ENCODE measurements at regions of chrX and their contacts with region 1.

Region 1: DNA sequence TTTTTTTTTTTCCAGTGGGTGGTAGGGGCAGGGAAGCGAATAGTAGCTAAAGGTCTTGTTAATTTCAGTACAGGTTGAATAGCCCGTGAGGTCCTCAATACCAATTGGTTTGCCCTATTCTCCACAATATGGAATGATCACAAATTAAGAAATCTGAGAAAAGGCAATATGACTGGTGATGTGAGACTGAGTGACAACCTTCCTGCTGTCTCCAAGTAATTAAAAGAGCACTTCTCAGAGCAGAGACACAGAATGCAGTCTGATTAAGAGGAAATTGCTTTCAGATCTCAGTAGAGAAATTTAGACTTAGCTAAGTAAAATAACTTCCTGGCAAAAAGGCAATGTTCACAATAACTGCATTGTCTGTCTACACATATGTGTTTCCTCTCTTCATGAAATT is 23.0 kb downstream of the GPR174 start:
- DNase-seq: no peak
- H3K4me3 Mint-ChIP-seq: peak overlapping the region; percentile 57
- H3K27ac Mint-ChIP-seq: peak overlapping the region; percentile 77
- H3K4me1 Mint-ChIP-seq: peaks cover 90% of the 10 kb centered on the region
- H3K27me3 Mint-ChIP-seq: no peaks in the 10 kb centered on the region

Region 2: DNA sequence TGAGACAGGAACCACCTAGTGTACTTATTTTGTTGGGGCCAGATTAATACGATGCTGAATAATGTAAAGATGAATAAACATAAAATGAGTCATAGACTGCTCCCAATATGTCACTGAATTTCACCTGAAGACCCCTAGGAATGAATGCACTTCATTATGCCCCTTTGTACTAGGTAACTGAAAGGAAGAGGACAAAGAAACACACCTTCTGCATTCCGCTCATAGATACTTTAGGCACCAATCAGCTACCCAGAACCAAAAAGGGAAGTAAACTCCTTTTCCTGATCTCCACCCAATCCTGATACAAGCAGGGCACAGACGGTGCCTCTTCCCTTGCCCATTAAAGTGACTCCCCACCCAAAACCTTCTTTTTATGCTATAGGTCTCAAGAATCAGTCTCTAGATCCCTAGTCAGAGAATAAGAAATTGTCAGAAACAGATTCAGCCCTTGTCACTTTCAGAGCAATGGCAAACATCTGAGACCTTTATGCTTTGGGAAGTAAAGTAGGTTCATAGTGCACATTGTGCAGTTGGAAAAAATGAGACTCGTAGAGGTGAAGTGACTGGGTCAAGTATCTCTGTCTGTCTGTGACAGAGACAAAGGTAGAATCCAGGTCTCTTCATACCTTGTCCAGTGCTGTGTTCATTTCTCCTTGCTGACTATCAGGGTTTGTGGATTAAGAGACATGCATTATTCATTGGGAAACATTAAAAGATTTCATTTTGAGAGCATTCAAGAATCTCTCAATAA is 20.6 kb before region 1 on chrX:
- CTCF ChIA-PET with region 1: interaction called, 4 read pairs
- POLR2A ChIA-PET with region 1: interaction called, 147 read pairs
- DNase-seq: no peak
- H3K4me3 Mint-ChIP-seq: peak overlapping the region; percentile 96
- H3K27ac Mint-ChIP-seq: peak overlapping the region; percentile 78
- H3K4me1 Mint-ChIP-seq: peaks cover 43% of the 10 kb centered on the region
- H3K27me3 Mint-ChIP-seq: no peaks in the 10 kb centered on the region

Region 3: DNA sequence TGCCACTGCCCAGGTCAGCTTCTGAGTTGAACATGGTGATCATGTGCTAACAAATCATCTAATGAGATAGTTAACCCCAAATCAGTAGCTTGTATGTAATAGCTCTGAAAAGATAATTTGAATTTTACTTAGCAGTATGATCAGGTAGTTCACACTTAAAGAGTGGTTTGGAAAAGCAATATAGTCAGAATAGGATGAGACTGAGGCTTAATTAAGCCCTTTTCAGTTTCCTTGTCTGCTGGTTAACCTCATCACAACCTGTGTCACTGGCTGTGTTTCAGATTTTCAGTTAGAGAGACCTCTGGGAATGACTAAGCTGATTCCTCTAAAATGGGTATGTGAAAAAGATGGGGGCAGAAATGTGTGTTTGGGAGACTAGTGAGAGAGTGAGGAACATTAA is 15.2 kb after region 1 on chrX:
- CTCF ChIA-PET with region 1: no interaction called
- POLR2A ChIA-PET with region 1: interaction called, 50 read pairs
- DNase-seq: no peak
- H3K4me3 Mint-ChIP-seq: peak overlapping the region; percentile 5
- H3K27ac Mint-ChIP-seq: peak overlapping the region; percentile 84
- H3K4me1 Mint-ChIP-seq: peaks cover 57% of the 10 kb centered on the region
- H3K27me3 Mint-ChIP-seq: no peaks in the 10 kb centered on the region

Region 4: GRCh38 chrX:79288733-79289132 is 121.3 kb after region 1 on chrX:
- CTCF ChIA-PET with region 1: no interaction called
- POLR2A ChIA-PET with region 1: no interaction called
- DNase-seq: no peak
- H3K4me3 Mint-ChIP-seq: no peak overlapping the region
- H3K27ac Mint-ChIP-seq: no peak overlapping the region
- H3K4me1 Mint-ChIP-seq: peaks cover 14% of the 10 kb centered on the region
- H3K27me3 Mint-ChIP-seq: no peaks in the 10 kb centered on the region

Measured in activated CD4-positive, alpha-beta memory T cell treated with anti-CD3 and anti-CD28 coated beads, Interleukin-2, amount 10 ng/mL, durations not matched to agents 7 days and 5 days (primary cell).